ENCODE measurements at regions of chr11 and their contacts with region 1.

Region 1: DNA sequence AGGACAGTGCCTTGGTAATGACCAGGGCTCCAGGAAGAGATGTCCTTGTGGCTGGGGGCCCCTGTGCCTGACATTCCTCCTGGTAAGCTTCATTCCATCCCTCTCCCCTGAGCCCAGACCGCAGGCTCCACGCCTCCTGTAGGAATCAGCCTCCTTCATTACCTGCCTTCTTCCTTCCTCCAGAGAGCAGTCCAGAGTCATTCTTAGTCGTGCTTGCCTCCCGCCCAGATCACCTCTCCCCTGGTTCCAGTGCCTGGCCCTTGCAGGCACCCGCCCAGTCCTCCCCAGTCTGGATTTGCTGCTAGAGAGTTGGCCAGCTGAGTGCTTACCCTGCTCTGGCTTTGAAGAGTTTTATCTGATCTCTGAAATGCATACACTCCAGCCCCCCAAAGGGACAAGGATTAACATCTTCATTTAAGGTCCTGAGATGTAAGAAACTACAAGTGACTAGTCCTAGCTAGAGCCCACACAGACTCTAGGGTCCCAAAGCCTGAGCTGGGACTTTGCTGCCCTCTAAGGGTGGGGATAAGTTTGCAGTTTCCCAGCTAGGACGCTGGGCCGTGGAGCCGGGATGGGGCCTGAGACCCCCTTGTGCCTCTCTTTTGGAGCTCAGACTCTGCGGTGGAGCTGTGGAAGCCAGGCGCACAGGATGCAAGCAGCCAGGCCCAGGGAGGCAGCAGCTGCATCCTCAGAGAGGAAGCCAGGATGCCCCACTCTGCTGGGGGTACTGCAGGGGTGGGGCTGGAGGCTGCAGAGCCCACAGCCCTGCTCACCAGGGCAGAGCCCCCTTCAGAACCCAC is 1.6 kb downstream of the NR1H3 start:
- DNase-seq: peak; percentile 89 to 90
- H3K4me3 ChIP-seq: peak overlapping the region; percentile 57; the same call in 1 of the 2 replicates
- H3K27ac ChIP-seq: peak overlapping the region; percentile 61
- H3K4me1 ChIP-seq: peaks cover 56% of the 10 kb centered on the region
- H3K27me3 ChIP-seq: no peaks in the 10 kb centered on the region
- CTCF ChIP-seq: peak; percentile 94

Region 2: GRCh38 chr11:46889689-46890475 is 369.5 kb before region 1 on chr11:
- CTCF ChIA-PET with region 1: no interaction called
- POLR2A ChIA-PET with region 1: no interaction called
- intact Hi-C with region 1: loop called (anchors 1 kb)
- DNase-seq: peak; percentile 53 to 66
- H3K4me3 ChIP-seq: no peak overlapping the region
- H3K27ac ChIP-seq: no peak overlapping the region
- H3K4me1 ChIP-seq: no peaks in the 10 kb centered on the region
- H3K27me3 ChIP-seq: no peaks in the 10 kb centered on the region
- CTCF ChIP-seq: peak; percentile 97

Region 3: GRCh38 chr11:47176328-47177228 is 82.8 kb before region 1 on chr11 and contains the start of gene ARFGAP2:
- CTCF ChIA-PET with region 1: interaction called, 9 read pairs
- POLR2A ChIA-PET with region 1: interaction called, 9 read pairs
- intact Hi-C with region 1: loop called (anchors 1 kb)
- DNase-seq: peak; percentile 85 to 97
- H3K4me3 ChIP-seq: peak within 1 kb of the TSS; percentile 95
- H3K27ac ChIP-seq: peak within 1 kb of the TSS; percentile 77
- H3K4me1 ChIP-seq: peaks cover 12% of the 10 kb centered on the region
- H3K27me3 ChIP-seq: no peaks in the 10 kb centered on the region
- CTCF ChIP-seq: no peak
- total RNA-seq, gene ARFGAP2: 122 and 130 TPM in 2 replicates

Region 4: GRCh38 chr11:47191865-47192521 is 67.4 kb before region 1 on chr11:
- CTCF ChIA-PET with region 1: interaction called, 5 read pairs
- POLR2A ChIA-PET with region 1: interaction called, 15 read pairs
- intact Hi-C with region 1: no loop called
- DNase-seq: peak; percentile 79 to 96
- H3K4me3 ChIP-seq: no peak overlapping the region
- H3K27ac ChIP-seq: peak overlapping the region; percentile 91
- H3K4me1 ChIP-seq: peaks cover 84% of the 10 kb centered on the region
- H3K27me3 ChIP-seq: no peaks in the 10 kb centered on the region
- CTCF ChIP-seq: no peak

Region 5: DNA sequence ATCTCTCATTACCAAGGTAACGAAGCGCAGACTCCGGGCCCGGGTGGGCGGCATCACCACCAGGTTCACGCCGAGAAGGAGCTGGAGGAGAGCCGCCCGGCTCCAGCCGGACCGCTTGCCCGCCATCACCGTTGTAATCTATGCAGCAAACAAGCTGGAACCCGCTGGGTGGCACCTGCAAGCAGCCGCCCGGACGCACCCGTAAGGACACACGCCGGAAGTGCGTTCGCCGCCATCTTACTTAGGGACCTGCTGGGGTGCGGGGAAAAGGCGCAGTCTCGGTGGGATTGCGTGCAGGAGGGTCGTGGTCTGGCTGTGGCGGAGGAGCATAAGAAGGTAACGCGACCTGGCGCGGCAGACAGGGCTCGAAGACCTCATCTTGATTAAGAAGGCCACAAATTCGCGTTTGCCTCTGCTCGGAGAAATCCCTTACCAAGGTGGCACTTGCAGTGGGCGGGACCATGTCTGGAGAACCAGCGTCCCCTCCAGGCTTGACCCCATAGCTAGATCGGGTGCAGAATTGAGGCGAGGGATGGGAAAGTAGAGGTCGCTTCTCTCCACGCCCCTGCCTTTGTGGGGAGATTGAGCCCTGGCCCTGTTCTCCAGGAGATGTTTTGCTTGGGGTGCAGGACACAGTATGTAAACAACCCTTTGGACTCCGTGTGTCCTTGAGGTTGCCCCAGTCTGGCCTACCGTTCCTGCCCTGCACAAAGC is 10.6 kb before region 1 on chr11 and contains the start of gene ACP2:
- CTCF ChIA-PET with region 1: interaction called, 7 read pairs
- POLR2A ChIA-PET with region 1: interaction called, 15 read pairs
- intact Hi-C with region 1: no loop called
- DNase-seq: peak; percentile 77 to 88
- H3K4me3 ChIP-seq: peak within 1 kb of the TSS; percentile 74
- H3K27ac ChIP-seq: peak within 1 kb of the TSS; percentile 33
- H3K4me1 ChIP-seq: peaks cover 33% of the 10 kb centered on the region
- H3K27me3 ChIP-seq: no peaks in the 10 kb centered on the region
- CTCF ChIP-seq: no peak; the same call in 1 of the 2 replicates
- total RNA-seq, gene ACP2: 20.4 and 24.1 TPM in 2 replicates

Region 6: GRCh38 chr11:47407746-47408590 is 148.6 kb after region 1 on chr11 and contains the start of gene SLC39A13:
- CTCF ChIA-PET with region 1: no interaction called
- POLR2A ChIA-PET with region 1: no interaction called
- intact Hi-C with region 1: loop called (anchors 5 kb)
- DNase-seq: peak; percentile 86 to 99
- H3K4me3 ChIP-seq: peak within 1 kb of the TSS; percentile 90
- H3K27ac ChIP-seq: peak within 1 kb of the TSS; percentile 79
- H3K4me1 ChIP-seq: peaks cover 28% of the 10 kb centered on the region
- H3K27me3 ChIP-seq: no peaks in the 10 kb centered on the region
- CTCF ChIP-seq: peak; percentile 81
- total RNA-seq, gene SLC39A13: 28.8 and 32.3 TPM in 2 replicates

Region 7: GRCh38 chr11:47593934-47594855 is 334.8 kb after region 1 on chr11 and contains the start of gene C1QTNF4:
- CTCF ChIA-PET with region 1: no interaction called
- POLR2A ChIA-PET with region 1: no interaction called
- intact Hi-C with region 1: no loop called
- DNase-seq: no peak
- H3K4me3 ChIP-seq: no peak within 1 kb of the TSS
- H3K27ac ChIP-seq: no peak within 1 kb of the TSS
- H3K4me1 ChIP-seq: no peaks in the 10 kb centered on the region
- H3K27me3 ChIP-seq: peaks cover 22% of the 10 kb centered on the region; the same call in 1 of the 2 replicates
- CTCF ChIP-seq: no peak
- total RNA-seq, gene C1QTNF4: 0.22 and 0.63 TPM in 2 replicates